ENCODE measurements at regions of chr13 and their contacts with region 1.

Region 1: GRCh38 chr13:40271931-40272775 is 394.3 kb downstream of the FOXO1 start:
- DNase-seq: peak in 6 of 10 donors; percentile 24 to 67 (median 54)
- H3K4me3 ChIP-seq: no peak overlapping the region
- H3K27ac ChIP-seq: peak overlapping the region; percentile 14 to 89 (median 77)
- H3K27me3 ChIP-seq: no peaks in the 10 kb centered on the region
- CTCF ChIP-seq: no peak

Region 2: DNA sequence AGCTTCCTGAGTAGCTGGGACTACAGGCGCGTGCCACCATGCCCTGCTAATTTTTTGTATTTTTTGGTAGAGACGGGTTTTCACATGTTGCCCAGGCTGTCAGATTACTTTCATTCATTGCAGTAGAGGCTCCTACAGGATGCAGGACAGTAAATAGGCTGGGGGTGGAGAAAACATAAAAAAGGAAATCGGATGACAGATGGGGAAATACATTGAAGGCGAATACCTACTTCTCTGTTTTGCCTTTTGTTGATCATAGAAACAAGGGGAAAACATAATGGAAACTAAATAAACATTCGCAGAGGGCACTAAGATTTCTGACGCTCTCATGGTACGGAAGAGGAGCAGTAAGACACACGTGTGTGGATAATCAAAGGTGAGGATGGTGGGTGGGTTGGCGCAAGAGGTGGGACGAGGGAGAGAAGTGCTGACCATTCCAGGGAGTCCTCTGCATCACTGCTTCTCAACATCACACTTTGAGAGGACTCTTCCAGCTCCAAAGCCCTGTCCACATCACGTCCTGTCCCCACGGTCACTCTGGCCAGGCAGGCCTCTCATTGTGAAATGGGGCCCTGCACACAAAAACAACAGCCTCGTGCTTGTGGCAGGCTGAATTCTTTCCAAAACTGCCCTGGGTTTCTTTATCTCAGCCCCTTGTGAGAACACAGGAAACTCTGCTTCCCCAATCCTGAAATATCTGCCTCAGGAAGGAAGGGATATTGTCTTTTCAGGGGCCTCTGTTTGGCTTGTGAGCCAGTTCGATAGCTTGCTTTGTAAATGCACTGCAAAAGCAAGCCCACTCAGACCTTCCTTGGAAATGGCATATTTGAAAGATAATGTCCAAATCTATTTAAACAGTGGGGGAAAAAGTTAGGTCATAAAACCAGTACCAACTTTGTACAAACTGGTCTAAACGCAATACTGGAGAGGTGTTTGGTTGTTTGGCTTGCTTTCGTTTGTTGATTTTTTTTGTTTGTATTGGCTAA is 205.8 kb after region 1 on chr13:
- intact Hi-C with region 1: loop called in 1 of 2 experiments (anchors 10 kb)
- DNase-seq: no peak
- H3K4me3 ChIP-seq: no peak overlapping the region
- H3K27ac ChIP-seq: peak overlapping the region in 39 of 59 donors; percentile 4 to 74 (median 54)
- H3K27me3 ChIP-seq: no peaks in the 10 kb centered on the region
- CTCF ChIP-seq: no peak

Measured in dorsolateral prefrontal cortex (tissue), 120 donors.